ENCODE measurements at regions of chr6 and their contacts with region 1.

Region 1: DNA sequence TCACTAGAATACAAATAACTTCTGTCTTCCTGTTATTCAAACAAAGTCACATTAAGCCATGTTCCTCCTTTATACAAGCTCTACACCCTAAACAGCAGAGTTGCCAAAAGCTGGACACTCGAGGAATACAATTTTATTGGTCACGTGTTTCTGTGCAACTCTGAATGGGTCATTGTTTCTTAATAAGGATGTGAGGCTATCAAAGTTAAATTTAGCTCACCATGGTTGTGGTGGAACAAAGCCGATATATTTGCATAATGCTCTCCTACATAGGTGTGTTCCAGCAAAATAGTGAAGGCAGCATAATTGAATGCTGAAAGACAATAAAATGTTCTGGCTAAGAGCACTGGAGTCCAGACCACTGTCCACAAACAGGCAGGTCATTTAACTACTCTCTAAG is 36.9 kb upstream of the CD2AP start:
- DNase-seq: no peak
- ATAC-seq: peak; percentile 34
- H3K4me3 Mint-ChIP-seq: peak overlapping the region; percentile 38
- H3K27ac Mint-ChIP-seq: no peak overlapping the region
- H3K4me1 Mint-ChIP-seq: peaks cover 48% of the 10 kb centered on the region
- H3K27me3 Mint-ChIP-seq: no peaks in the 10 kb centered on the region
- CTCF ChIP-seq: no peak

Region 2: DNA sequence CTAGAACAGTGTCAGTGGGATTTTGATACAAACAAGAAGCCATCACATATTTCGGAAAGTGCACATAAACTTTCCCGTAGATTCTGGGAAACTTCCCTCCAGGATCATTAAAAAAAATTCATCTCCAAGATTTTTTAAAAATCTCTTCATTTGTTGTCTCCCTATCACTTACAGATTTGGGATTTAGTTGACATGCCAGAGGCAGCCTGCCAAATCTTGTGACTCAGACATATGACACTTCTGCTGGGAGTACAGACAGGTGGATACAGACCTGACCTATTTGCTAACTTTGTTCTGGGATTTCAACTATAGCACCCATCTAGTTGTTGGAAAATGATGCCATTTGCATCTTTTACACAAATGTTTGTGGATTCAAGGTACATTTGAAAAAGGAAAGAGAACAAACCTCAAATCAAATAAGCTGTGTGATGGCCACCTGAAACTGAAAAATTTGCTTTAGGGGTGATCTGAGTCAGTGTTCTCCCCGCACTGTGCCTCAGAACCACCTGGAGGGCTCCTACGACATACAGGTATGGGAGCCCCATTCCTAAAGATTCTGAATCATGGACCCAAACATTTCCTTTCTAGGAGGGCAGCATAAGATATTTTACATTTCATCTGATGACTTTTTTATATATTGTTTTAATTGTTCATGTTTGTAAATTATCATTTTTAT is 15.0 kb after region 1 on chr6:
- CTCF ChIA-PET with region 1: no interaction called
- POLR2A ChIA-PET with region 1: no interaction called
- intact Hi-C with region 1: loop called (anchors 2 kb)
- DNase-seq: no peak
- ATAC-seq: no peak
- H3K4me3 Mint-ChIP-seq: no peak overlapping the region
- H3K27ac Mint-ChIP-seq: no peak overlapping the region
- H3K4me1 Mint-ChIP-seq: peaks cover 7% of the 10 kb centered on the region
- H3K27me3 Mint-ChIP-seq: no peaks in the 10 kb centered on the region
- CTCF ChIP-seq: no peak

Region 3: DNA sequence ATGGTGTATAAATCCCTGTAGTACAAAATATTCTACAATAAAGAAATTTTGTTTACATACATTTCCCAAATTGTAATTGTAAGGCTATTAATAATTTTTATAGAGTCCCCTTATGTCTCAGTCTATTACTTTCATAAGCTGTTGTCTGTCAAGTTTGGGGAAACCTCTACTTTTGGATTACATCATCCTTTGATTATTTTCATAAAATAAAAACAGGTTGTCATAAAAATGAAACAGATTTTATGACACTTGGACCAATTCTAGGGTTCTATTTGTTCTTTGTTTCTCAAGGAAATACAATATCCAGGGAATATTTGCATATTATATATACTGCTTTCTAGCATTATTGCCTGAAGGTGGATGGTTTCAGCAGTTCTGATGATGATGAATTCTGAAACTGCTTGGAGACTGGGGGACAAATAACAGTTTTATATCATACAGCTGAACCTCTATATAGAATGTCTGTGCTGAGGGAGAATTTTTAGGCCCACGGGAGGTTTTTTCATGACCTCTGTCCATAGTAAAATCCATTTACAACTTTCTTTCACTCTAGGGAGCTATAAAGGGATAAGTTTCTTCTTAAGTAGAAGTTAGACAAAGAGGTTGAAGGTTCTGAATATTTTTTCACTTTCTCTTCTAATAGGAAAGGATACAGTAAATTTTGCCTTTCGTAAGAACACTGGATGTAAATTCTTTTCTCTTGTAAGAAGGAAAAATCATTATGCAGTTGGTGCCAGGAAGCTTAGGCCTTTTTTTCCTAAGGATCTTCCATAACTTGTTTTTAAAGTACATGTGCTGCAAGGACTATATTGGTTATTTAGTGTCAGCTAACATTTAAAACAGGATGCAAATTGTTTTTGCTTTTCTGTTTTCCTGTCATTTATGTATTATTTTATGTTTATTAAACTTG is 94.9 kb after region 1 on chr6:
- CTCF ChIA-PET with region 1: no interaction called
- POLR2A ChIA-PET with region 1: no interaction called
- intact Hi-C with region 1: no loop called
- DNase-seq: no peak
- ATAC-seq: no peak
- H3K4me3 Mint-ChIP-seq: no peak overlapping the region
- H3K27ac Mint-ChIP-seq: no peak overlapping the region
- H3K4me1 Mint-ChIP-seq: no peaks in the 10 kb centered on the region
- H3K27me3 Mint-ChIP-seq: no peaks in the 10 kb centered on the region
- CTCF ChIP-seq: no peak

Region 4: DNA sequence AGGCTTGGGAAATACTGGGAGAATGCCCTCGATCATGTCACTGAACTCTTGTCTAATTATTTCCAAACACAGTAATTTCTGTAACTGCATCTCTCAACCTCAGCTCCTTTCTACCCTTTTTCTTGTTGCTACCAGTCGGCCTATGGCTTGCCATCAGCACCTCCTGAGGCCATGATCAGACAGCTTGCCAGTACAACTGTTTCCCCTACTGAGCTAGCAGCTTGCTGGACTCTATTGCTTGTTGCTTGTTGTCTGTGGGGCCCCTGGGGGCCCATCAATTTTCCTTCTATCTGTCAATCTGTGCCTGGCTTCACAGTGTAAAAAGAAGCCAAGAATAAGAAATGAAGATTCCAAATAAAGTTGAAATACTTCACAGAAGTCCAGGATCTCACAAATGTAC is 465.0 kb after region 1 on chr6:
- CTCF ChIA-PET with region 1: no interaction called
- POLR2A ChIA-PET with region 1: no interaction called
- intact Hi-C with region 1: no loop called
- DNase-seq: no peak
- ATAC-seq: no peak
- H3K4me3 Mint-ChIP-seq: no peak overlapping the region
- H3K27ac Mint-ChIP-seq: no peak overlapping the region
- H3K4me1 Mint-ChIP-seq: no peaks in the 10 kb centered on the region
- H3K27me3 Mint-ChIP-seq: no peaks in the 10 kb centered on the region
- CTCF ChIP-seq: no peak

Region 5: DNA sequence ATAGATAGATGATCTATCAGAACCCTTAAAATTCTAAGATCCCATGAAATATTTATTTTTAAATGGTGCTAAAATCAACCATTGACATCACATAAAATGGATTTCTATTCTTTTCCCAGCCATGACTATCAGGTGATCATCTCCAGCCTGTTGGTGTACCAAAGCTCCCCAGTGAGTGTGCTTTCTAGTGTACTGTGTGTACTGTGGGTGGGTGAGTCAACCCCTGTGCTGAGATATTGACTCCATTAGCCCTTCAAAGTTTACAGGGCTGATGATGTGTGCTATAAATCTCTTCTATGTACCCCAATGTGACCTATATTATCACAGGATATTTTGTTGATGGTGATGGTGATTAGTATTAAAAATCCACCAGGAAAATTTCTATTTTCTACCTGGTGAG is 1677.8 kb after region 1 on chr6:
- CTCF ChIA-PET with region 1: no interaction called
- POLR2A ChIA-PET with region 1: no interaction called
- intact Hi-C with region 1: no loop called
- DNase-seq: no peak
- ATAC-seq: no peak
- H3K4me3 Mint-ChIP-seq: no peak overlapping the region
- H3K27ac Mint-ChIP-seq: no peak overlapping the region
- H3K4me1 Mint-ChIP-seq: no peaks in the 10 kb centered on the region
- H3K27me3 Mint-ChIP-seq: no peaks in the 10 kb centered on the region
- CTCF ChIP-seq: no peak

Measured in activated B cell treated with CpG ODN at 0.5 μM for 24 hours (primary cell).